ENCODE measurements at regions of chr5 and their contacts with region 1.

Region 1: DNA sequence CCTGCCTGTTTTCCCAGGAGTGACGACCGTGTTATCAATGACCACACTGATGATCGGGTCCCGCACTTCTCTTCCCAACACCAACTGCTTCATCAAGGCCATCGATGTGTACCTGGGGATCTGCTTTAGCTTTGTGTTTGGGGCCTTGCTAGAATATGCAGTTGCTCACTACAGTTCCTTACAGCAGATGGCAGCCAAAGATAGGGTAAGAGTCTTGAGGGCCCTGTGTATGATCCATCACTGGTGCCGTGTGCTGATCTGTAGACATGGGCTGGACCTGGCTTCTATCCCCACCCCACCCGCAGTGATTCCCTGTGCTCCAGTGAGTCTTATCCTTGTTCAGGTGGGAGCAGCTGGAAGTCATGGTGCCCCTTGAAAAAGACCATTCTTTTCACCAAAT is 26.0 kb downstream of the GABRP start:
- DNase-seq: peak; percentile 71
- ATAC-seq: peak; percentile 97
- H3K4me3 ChIP-seq: no peak overlapping the region
- H3K27ac ChIP-seq: no peak overlapping the region
- H3K4me1 ChIP-seq: no peaks in the 10 kb centered on the region
- H3K27me3 ChIP-seq: peaks cover 6% of the 10 kb centered on the region
- CTCF ChIP-seq: peak; percentile 76
- POLR2A ChIP-seq: 0 out of 2 replicates have a peak, but pooled peaks have one; percentile 27
- RAD21 ChIP-seq: peak; percentile 92

Region 2: GRCh38 chr5:170633235-170634081 is 176.1 kb before region 1 on chr5:
- CTCF ChIA-PET with region 1: no interaction called
- POLR2A ChIA-PET with region 1: no interaction called
- dilution Hi-C with region 1: no loop called
- in situ Hi-C with region 1: no loop called
- intact Hi-C with region 1: no loop called
- DNase-seq: peak; percentile 65
- ATAC-seq: peak; percentile 75
- H3K4me3 ChIP-seq: peak overlapping the region; percentile 16; the same call in 1 of the 2 replicates
- H3K27ac ChIP-seq: no peak overlapping the region
- H3K4me1 ChIP-seq: peaks cover 4% of the 10 kb centered on the region; the same call in 1 of the 2 replicates
- H3K27me3 ChIP-seq: peaks cover 2% of the 10 kb centered on the region; the same call in 1 of the 2 replicates
- CTCF ChIP-seq: no peak
- POLR2A ChIP-seq: no peak
- RAD21 ChIP-seq: no peak

Region 3: DNA sequence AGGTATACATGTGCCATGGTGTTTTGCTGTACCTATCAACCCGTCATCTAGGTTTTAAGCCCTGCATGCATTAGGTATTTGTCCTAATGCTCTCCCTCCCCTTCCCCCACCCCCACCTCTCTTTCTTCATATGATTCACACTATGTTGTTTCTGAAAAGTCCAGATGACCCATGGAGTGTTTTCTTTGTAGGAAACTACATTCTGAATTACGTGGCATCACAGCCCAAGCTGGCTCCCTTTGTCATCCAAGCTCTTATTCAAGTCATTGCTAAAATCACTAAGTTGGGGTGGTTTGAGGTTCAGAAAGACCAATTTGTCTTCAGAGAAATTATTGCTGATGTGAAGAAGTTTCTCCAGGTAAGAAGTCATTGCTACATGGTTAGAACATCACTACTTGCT is 82.6 kb after region 1 on chr5:
- CTCF ChIA-PET with region 1: no interaction called
- POLR2A ChIA-PET with region 1: no interaction called
- dilution Hi-C with region 1: no loop called
- in situ Hi-C with region 1: no loop called
- intact Hi-C with region 1: no loop called
- DNase-seq: peak; percentile 90
- ATAC-seq: peak; percentile 48
- H3K4me3 ChIP-seq: no peak overlapping the region
- H3K27ac ChIP-seq: no peak overlapping the region
- H3K4me1 ChIP-seq: peaks cover 4% of the 10 kb centered on the region; the same call in 1 of the 2 replicates
- H3K27me3 ChIP-seq: no peaks in the 10 kb centered on the region
- CTCF ChIP-seq: no peak
- POLR2A ChIP-seq: no peak
- RAD21 ChIP-seq: no peak

Region 4: GRCh38 chr5:170917113-170917512 is 107.6 kb after region 1 on chr5:
- CTCF ChIA-PET with region 1: interaction called, 4 read pairs
- POLR2A ChIA-PET with region 1: no interaction called
- dilution Hi-C with region 1: no loop called
- in situ Hi-C with region 1: loop called (anchors 5 kb)
- intact Hi-C with region 1: loop called (anchors 2 kb)
- DNase-seq: no peak
- ATAC-seq: no peak
- H3K4me3 ChIP-seq: no peak overlapping the region
- H3K27ac ChIP-seq: no peak overlapping the region
- H3K4me1 ChIP-seq: peaks cover 6% of the 10 kb centered on the region
- H3K27me3 ChIP-seq: no peaks in the 10 kb centered on the region
- CTCF ChIP-seq: peak; percentile 42
- POLR2A ChIP-seq: no peak
- RAD21 ChIP-seq: peak; percentile 23

Region 5: GRCh38 chr5:170974461-170974860 is 164.9 kb after region 1 on chr5:
- CTCF ChIA-PET with region 1: no interaction called
- POLR2A ChIA-PET with region 1: no interaction called
- dilution Hi-C with region 1: no loop called
- in situ Hi-C with region 1: no loop called
- intact Hi-C with region 1: no loop called
- DNase-seq: no peak
- ATAC-seq: no peak
- H3K4me3 ChIP-seq: no peak overlapping the region
- H3K27ac ChIP-seq: no peak overlapping the region
- H3K4me1 ChIP-seq: no peaks in the 10 kb centered on the region
- H3K27me3 ChIP-seq: no peaks in the 10 kb centered on the region
- CTCF ChIP-seq: no peak
- POLR2A ChIP-seq: no peak
- RAD21 ChIP-seq: no peak

Region 6: DNA sequence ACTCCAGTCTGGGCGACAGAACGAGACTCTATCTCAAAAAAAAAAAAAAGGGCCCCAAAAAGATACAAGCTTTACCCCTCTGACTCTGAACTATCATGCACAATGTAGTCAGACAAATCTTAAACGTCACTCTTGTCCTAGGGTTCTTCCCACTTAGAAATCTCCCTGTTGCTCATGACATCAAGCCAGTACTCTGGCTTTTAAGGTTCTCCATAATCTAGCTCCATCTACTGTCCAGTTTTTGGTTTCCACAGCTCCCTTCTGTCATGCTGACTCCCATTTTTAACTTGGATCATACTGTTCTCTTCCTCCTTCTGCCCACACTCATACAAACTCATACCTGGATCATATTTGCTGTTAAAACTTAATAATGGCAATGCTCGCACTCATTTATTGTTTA is 342.8 kb after region 1 on chr5:
- CTCF ChIA-PET with region 1: interaction called, 4 read pairs
- POLR2A ChIA-PET with region 1: no interaction called
- dilution Hi-C with region 1: no loop called
- in situ Hi-C with region 1: loop called (anchors 25 kb)
- intact Hi-C with region 1: loop called (anchors 5 kb)
- DNase-seq: peak; percentile 54
- ATAC-seq: peak; percentile 75
- H3K4me3 ChIP-seq: no peak overlapping the region
- H3K27ac ChIP-seq: no peak overlapping the region
- H3K4me1 ChIP-seq: peaks cover 3% of the 10 kb centered on the region; the same call in 1 of the 2 replicates
- H3K27me3 ChIP-seq: no peaks in the 10 kb centered on the region
- CTCF ChIP-seq: peak; percentile 47
- POLR2A ChIP-seq: no peak
- RAD21 ChIP-seq: peak; percentile 53

Region 7: DNA sequence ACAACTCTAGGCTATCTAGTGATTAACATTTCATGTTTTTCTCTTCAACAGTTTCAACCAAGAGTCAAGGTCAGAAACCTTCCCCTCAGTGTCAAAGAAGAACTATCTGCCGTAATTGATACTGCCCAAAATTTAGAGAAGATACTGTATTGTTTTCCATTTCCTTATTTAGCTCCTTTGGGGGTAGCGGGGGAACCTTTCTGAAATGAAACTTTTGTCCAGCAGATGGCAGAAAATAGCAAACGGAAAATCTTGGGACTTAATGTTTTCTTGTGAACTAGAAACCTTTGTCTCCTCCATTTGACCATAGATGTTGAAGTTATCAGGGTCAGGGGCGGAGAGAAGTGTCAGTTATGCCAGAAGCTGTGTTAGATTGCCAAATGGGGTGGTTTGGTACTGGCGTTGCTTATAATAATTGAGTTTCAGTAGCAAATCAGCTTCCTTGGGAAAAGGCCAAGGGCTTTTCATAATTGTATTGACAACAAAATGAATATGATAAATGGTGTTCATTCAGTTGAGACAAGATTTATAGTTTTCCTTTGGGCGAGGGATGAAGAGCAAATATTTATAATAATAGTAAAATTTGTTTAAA is 397.8 kb after region 1 on chr5:
- CTCF ChIA-PET with region 1: interaction called, 6 read pairs
- POLR2A ChIA-PET with region 1: no interaction called
- dilution Hi-C with region 1: no loop called
- in situ Hi-C with region 1: no loop called
- intact Hi-C with region 1: loop called (anchors 2 kb)
- DNase-seq: peak; percentile 57
- ATAC-seq: peak; percentile 79
- H3K4me3 ChIP-seq: no peak overlapping the region
- H3K27ac ChIP-seq: no peak overlapping the region
- H3K4me1 ChIP-seq: no peaks in the 10 kb centered on the region
- H3K27me3 ChIP-seq: no peaks in the 10 kb centered on the region
- CTCF ChIP-seq: peak; percentile 64
- POLR2A ChIP-seq: no peak
- RAD21 ChIP-seq: peak; percentile 65

Region 8: DNA sequence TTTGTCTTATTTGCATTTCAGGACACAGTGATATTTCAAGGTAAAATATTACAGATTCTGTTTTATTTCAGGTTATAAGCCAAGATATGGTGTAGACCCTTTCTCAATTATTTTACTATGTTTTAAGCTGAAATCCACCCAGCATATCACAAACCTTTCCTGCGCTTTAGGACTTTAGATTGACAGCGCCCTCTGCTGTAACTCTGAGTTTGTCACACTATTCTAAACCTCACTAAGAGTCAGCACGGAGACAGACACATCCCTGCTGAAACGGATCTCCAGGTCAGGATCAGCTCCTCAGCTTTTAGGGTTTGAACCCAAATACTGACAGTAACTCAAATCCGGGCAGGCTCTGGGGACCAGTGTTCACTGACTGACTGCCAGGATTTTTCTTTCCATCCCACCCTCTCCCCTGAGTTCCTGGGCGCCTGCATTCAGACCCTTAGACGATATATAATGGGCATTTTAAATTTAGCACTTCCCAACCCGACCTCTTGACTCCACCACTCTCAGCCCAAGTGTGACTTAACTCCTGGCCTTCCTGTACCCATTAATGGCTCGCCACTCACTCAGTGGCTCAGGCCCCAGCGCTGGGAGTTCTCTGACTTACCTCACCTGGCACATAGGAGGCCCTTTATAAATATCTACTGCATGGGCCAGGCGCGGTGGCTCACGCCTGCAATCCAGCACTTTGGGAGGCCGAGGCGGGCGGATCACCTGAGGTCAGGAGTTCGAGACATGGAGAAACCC is 533.0 kb after region 1 on chr5:
- CTCF ChIA-PET with region 1: interaction called, 3 read pairs
- POLR2A ChIA-PET with region 1: no interaction called
- dilution Hi-C with region 1: no loop called
- in situ Hi-C with region 1: loop called (anchors 5 kb)
- intact Hi-C with region 1: loop called (anchors 1 kb)
- DNase-seq: peak; percentile 71
- ATAC-seq: peak; percentile 97
- H3K4me3 ChIP-seq: no peak overlapping the region
- H3K27ac ChIP-seq: no peak overlapping the region
- H3K4me1 ChIP-seq: no peaks in the 10 kb centered on the region
- H3K27me3 ChIP-seq: 0 out of 2 replicates have a peak, but pooled peaks cover 3% of the 10 kb centered on the region
- CTCF ChIP-seq: peak; percentile 78
- POLR2A ChIP-seq: no peak
- RAD21 ChIP-seq: peak; percentile 79

Measured in IMR-90 (cell line).